ENCODE measurements at regions of chr12 and their contacts with region 1.

Region 1: GRCh38 chr12:6953442-6954315 is 2.5 kb downstream of the PTPN6 start:
- DNase-seq: peak; percentile 87
- H3K4me3 Mint-ChIP-seq: peak overlapping the region; percentile 98
- H3K27ac Mint-ChIP-seq: peak overlapping the region; percentile 93
- H3K4me1 Mint-ChIP-seq: peaks cover 69% of the 10 kb centered on the region
- H3K27me3 Mint-ChIP-seq: no peaks in the 10 kb centered on the region

Region 2: GRCh38 chr12:6443361-6443983 is 510.2 kb before region 1 on chr12:
- CTCF ChIA-PET with region 1: no interaction called
- intact Hi-C with region 1: loop called (anchors 10 kb)
- DNase-seq: peak; percentile 79
- H3K4me3 Mint-ChIP-seq: peak overlapping the region; percentile 92
- H3K27ac Mint-ChIP-seq: peak overlapping the region; percentile 98
- H3K4me1 Mint-ChIP-seq: peaks cover 74% of the 10 kb centered on the region
- H3K27me3 Mint-ChIP-seq: no peaks in the 10 kb centered on the region

Region 3: DNA sequence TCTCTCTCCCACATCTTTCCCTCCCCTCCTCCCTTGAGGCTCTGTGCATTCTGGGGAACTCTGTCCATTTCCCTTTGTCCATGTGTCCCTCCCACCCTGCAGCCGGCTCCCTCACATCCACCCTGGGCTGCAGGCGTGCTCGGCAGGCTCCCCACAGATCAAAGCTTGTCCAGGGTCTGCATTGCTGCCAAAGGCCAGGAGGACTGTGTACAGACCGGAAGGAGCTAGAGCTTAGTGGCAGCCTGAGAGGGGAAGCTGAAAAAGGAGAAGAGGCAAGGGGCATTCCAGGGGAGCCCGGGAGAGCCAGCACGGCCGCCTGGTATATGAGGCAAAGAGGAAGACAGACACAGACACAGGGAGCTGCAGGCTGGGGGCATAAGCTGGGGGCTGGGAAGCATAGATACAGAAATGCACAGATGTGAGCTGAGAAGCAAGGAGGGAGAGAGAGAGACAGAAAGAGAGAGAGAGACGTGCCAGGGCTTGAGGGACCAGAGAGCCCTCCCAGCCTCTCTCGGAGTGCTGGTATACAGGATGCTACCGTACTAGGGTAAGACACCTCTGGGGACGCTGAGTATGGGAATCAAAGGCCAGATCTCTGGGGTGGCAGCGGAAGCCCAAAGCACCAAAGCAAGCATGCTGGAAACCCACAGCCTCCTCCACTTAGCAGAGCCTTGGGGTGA is 161.0 kb before region 1 on chr12:
- CTCF ChIA-PET with region 1: no interaction called
- intact Hi-C with region 1: loop called (anchors 5 kb)
- DNase-seq: peak; percentile 61
- H3K4me3 Mint-ChIP-seq: peak overlapping the region; percentile 97
- H3K27ac Mint-ChIP-seq: peak overlapping the region; percentile 96
- H3K4me1 Mint-ChIP-seq: peaks cover 51% of the 10 kb centered on the region
- H3K27me3 Mint-ChIP-seq: no peaks in the 10 kb centered on the region

Region 4: DNA sequence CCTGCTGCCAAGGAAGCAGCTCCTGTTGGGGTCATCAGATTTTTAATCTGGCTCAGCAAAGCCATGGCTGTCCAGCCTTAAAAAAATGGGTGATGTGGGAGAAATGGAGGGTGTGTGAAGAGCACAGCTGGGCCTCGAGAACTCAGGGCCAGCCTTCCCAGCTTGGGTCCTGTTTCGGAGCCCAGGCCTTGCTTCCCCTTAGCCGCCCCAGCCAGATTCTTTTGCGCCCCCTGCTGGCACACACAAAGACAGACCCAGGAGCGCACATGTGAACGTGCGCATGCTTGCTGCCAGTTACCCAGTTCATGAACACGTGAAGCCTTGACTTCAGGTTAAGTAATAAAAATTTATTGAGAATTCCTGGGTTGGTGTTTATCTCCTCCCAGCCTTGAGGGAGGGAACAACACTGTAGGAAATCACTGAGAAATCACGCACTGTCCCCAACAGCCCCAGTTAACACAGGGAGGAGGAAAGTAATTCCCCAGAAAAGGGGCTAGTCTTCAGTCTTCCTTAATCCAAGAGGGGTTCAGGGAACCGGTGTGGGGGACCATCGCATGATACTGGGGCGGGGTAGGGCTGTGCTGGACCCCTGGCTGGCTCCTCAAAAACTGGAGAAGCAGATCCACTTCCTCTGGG is 11.5 kb after region 1 on chr12:
- CTCF ChIA-PET with region 1: interaction called, 397 read pairs
- intact Hi-C with region 1: loop called (anchors 1 kb)
- DNase-seq: peak; percentile 95
- H3K4me3 Mint-ChIP-seq: no peak overlapping the region
- H3K27ac Mint-ChIP-seq: peak overlapping the region; percentile 93
- H3K4me1 Mint-ChIP-seq: peaks cover 81% of the 10 kb centered on the region
- H3K27me3 Mint-ChIP-seq: no peaks in the 10 kb centered on the region